HEK293 (cell line): ENCODE measurements at regions of chr19 and their contacts with region 1.

Region 1: DNA sequence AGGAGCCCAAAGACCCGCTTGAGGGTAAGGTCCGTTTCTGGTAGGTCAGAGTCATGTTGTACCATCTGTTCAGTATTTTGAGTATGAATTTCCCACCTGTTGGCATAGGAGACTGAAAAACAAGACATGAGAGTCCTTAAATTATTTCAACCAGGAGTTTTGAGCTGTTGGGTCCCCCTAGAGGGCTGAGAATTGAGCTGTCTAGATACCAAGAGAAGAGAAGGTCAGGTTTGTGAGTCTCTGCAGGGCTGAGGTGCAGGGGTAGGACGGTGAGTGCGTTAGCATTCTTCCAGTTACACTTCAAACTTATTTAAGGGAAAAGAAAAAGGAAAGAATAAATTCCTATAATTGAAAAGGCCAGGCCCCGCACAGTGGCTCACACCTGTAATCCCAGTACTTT is 5.0 kb downstream of the CBLC start:
- H3K4me3 ChIP-seq: no peak overlapping the region
- H3K27ac ChIP-seq: no peak overlapping the region
- H3K4me1 ChIP-seq: no peaks in the 10 kb centered on the region
- CTCF ChIP-seq: no peak

Region 2: DNA sequence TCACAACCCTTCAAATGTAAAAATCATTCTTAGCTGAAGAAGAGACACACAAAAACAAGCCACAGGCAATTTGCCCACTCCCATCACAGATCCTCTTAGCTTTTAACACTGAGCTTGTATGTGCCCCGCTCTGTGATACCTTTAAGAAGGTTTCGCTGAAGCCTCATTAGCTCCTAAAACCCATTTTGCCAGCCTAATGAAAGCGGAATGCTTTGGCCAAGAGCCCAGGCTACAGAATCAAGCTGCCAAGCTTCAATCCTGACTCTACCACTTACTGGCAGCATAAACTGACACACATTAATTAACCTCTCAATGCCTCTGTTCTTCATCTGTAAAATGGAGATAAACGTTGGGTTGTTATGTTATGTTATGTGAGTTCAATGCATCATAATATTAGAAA is 436.8 kb before region 1 on chr19:
- CTCF ChIA-PET with region 1: no interaction called
- POLR2A ChIA-PET with region 1: no interaction called
- H3K4me3 ChIP-seq: no peak overlapping the region
- H3K27ac ChIP-seq: no peak overlapping the region
- H3K4me1 ChIP-seq: no peaks in the 10 kb centered on the region
- CTCF ChIP-seq: no peak

Region 3: DNA sequence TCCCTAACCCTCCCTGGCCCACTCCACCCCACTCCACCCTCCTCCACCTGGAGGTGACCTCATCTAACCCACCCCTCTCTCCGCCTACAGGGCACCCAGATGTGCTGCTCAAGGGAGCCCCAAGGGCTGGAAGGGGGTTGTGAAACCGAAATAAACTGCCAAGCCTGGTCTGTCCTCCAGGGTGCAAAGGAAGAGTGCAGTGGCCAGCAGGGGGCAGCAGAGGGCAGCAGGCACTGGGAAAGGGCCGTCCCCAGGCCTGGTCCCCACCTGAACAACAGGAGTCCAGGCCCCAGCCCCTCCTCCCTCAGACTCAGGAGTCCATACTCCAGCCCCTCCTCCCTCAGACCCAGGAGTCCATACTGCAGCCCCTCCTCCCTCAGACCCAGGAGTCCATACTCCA is 17.7 kb after region 1 on chr19:
- CTCF ChIA-PET with region 1: interaction called, 32 read pairs
- POLR2A ChIA-PET with region 1: no interaction called
- H3K4me3 ChIP-seq: no peak overlapping the region
- H3K27ac ChIP-seq: no peak overlapping the region
- H3K4me1 ChIP-seq: no peaks in the 10 kb centered on the region; the same call in 1 of the 2 replicates
- CTCF ChIP-seq: peak; percentile 98